Gastrocnemius medialis (tissue), 4 donors: ENCODE measurements at regions of chr3 and their contacts with region 1.

Region 1: GRCh38 chr3:136752422-136753325 is 496 bp upstream of the STAG1 start:
- DNase-seq: peak; percentile 97
- ATAC-seq: peak; percentile 83 to 90
- H3K4me3 ChIP-seq: peak overlapping the region; percentile 71 to 94 (median 86)
- H3K27ac ChIP-seq: peak overlapping the region; percentile 84 to 99 (median 92)
- H3K4me1 ChIP-seq: peaks cover 34 to 35% of the 10 kb centered on the region in 2 donors
- H3K27me3 ChIP-seq: no peaks in the 10 kb centered on the region
- CTCF ChIP-seq: peak in 1 of 5 experiments; percentile 26
- POLR2A ChIP-seq: peak; percentile 78 to 90

Region 2: GRCh38 chr3:136075218-136075808 is 677.4 kb before region 1 on chr3:
- in situ Hi-C with region 1: loop called (anchors 5 to 25 kb)
- intact Hi-C with region 1: loop called (anchors 1 kb)
- DNase-seq: peak; percentile 55 to 73
- ATAC-seq: peak; percentile 82 to 86
- H3K4me3 ChIP-seq: peak overlapping the region in 2 of 4 donors; percentile 10
- H3K27ac ChIP-seq: peak overlapping the region; percentile 69 to 81 (median 78)
- H3K4me1 ChIP-seq: peaks cover 22 to 42% of the 10 kb centered on the region in 2 donors
- H3K27me3 ChIP-seq: no peaks in the 10 kb centered on the region
- CTCF ChIP-seq: peak; percentile 89 to 98 (median 92)
- POLR2A ChIP-seq: no peak

Region 3: DNA sequence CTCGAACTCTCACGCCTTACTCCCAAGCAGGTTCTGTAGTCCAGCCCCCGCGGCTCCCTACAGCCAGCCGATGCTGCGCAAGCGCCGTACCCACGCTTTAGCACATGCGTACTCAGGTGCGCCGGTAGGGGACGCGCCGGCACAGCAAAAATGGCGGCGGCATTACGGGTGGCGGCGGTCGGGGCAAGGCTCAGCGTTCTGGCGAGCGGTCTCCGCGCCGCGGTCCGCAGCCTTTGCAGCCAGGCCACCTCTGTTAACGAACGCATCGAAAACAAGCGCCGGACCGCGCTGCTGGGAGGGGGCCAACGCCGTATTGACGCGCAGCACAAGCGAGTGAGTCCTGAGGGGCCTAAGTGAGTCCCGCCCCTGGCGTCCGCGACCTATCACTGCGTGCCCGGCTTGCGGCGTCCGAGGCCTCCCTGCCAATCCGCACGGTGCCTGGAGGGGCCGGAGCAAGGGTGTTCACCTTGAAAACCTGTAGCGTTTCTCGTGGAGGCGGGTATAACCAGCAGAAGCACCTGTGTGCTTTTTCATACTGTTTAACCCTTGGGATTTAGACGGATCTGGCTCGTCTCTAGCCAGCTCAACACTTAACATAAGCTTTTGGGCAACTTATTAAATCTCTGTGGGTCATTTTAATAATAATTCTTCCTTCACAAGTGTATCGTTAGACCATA is 502.3 kb before region 1 on chr3 and contains the start of gene PCCB:
- in situ Hi-C with region 1: loop called in 2 of 4 experiments (anchors 10 to 25 kb)
- intact Hi-C with region 1: loop called (anchors 2 kb)
- DNase-seq: peak; percentile 91 to 95
- ATAC-seq: peak; percentile 91 to 97
- H3K4me3 ChIP-seq: peak within 1 kb of the TSS; percentile 79 to 95 (median 79)
- H3K27ac ChIP-seq: peak within 1 kb of the TSS; percentile 92 to 98 (median 93)
- H3K4me1 ChIP-seq: peaks cover 16 to 20% of the 10 kb centered on the region in 2 donors
- H3K27me3 ChIP-seq: no peaks in the 10 kb centered on the region
- CTCF ChIP-seq: peak; percentile 83 to 97 (median 88)
- POLR2A ChIP-seq: peak; percentile 51 to 58
- total RNA-seq, gene PCCB: 29.8 to 41.4 (median 37.9) TPM

Region 4: DNA sequence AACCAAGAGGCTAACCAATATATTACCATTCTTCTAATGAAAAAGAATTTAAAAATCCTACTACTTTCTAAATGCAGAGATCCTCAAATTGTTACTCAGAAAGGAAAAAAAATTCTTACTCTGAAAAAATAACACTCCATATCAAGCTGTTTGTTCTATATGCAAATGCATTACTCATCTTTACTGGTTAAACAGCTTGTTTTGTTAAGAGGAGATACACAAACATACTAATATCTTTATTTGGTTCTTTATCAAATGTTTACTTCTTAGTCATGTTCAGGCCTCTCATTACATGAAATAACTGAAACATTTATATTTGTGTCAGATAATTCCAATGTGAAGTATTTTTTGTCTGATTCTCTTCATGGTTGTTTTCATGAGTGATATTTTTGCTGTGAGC is 355.8 kb before region 1 on chr3:
- in situ Hi-C with region 1: loop called (anchors 10 to 25 kb)
- intact Hi-C with region 1: no loop called
- DNase-seq: no peak
- ATAC-seq: no peak
- H3K4me3 ChIP-seq: no peak overlapping the region
- H3K27ac ChIP-seq: no peak overlapping the region
- H3K4me1 ChIP-seq: no peaks in the 10 kb centered on the region
- H3K27me3 ChIP-seq: no peaks in the 10 kb centered on the region
- CTCF ChIP-seq: no peak
- POLR2A ChIP-seq: no peak

Region 5: GRCh38 chr3:136778865-136779264 is 26.2 kb after region 1 on chr3:
- in situ Hi-C with region 1: no loop called
- intact Hi-C with region 1: no loop called
- DNase-seq: no peak
- ATAC-seq: no peak
- H3K4me3 ChIP-seq: no peak overlapping the region
- H3K27ac ChIP-seq: no peak overlapping the region
- H3K4me1 ChIP-seq: no peaks in the 10 kb centered on the region
- H3K27me3 ChIP-seq: no peaks in the 10 kb centered on the region
- CTCF ChIP-seq: no peak
- POLR2A ChIP-seq: no peak

Region 6: GRCh38 chr3:136861890-136862616 is 109.4 kb after region 1 on chr3 and contains the start of gene NCK1:
- in situ Hi-C with region 1: loop called in 1 of 4 experiments (anchors 10 kb)
- intact Hi-C with region 1: loop called (anchors 1 kb)
- DNase-seq: peak; percentile 98 to 99
- ATAC-seq: peak; percentile 91 to 92
- H3K4me3 ChIP-seq: peak within 1 kb of the TSS; percentile 79 to 96 (median 86)
- H3K27ac ChIP-seq: peak within 1 kb of the TSS; percentile 88 to 98 (median 94)
- H3K4me1 ChIP-seq: peaks cover 27 to 35% of the 10 kb centered on the region in 2 donors
- H3K27me3 ChIP-seq: no peaks in the 10 kb centered on the region
- CTCF ChIP-seq: peak in 4 of 5 experiments; percentile 11 to 22 (median 15)
- POLR2A ChIP-seq: peak; percentile 95
- total RNA-seq, gene NCK1: 23.5 to 36.6 (median 27.0) TPM

Region 7: DNA sequence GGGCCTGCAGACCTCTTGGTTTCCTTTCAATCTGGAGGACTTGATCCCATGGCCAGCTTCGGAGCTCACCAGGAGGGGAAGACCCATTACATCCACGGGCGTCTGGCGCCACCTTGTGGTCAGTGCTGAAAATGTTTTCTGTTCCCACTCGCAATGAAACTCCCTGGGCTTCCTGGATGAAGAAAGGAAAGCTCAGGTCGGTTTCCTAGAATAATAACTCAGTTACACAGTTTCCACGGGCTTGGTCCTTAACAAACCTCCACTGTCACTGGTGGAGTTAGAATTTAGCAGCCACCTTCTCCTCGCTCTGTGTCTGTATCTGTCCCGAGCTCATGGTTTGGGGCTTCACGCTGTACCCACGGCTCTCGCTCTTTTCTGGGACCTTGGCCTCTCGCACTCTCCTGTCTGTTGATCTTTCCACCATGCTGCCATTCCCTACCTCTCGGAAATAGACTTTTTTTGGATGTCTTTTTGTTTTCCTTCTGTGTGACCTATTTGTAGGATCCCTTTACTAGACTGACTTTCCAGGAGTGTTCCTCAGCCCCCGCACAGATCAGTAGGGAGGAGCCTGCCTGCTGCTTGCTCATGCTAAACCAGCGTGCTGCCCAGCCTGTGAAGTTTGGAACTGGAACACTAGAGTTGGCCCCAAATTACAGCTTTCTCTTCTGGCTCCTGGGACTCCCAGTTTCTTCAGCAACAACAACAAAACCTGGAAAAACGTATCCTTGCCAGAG is 261.4 kb after region 1 on chr3:
- in situ Hi-C with region 1: loop called (anchors 5 to 10 kb)
- intact Hi-C with region 1: loop called (anchors 1 kb)
- DNase-seq: peak; percentile 70 to 86
- ATAC-seq: peak; percentile 96 to 98
- H3K4me3 ChIP-seq: peak overlapping the region; percentile 38 to 56 (median 54)
- H3K27ac ChIP-seq: peak overlapping the region; percentile 37 to 63 (median 50)
- H3K4me1 ChIP-seq: no peaks in the 10 kb centered on the region
- H3K27me3 ChIP-seq: no peaks in the 10 kb centered on the region
- CTCF ChIP-seq: peak; percentile 88 to 93 (median 92)
- POLR2A ChIP-seq: no peak